Colonic mucosa (tissue), 4 donors: ENCODE measurements at regions of chr14 and their contacts with region 1.

Region 1: DNA sequence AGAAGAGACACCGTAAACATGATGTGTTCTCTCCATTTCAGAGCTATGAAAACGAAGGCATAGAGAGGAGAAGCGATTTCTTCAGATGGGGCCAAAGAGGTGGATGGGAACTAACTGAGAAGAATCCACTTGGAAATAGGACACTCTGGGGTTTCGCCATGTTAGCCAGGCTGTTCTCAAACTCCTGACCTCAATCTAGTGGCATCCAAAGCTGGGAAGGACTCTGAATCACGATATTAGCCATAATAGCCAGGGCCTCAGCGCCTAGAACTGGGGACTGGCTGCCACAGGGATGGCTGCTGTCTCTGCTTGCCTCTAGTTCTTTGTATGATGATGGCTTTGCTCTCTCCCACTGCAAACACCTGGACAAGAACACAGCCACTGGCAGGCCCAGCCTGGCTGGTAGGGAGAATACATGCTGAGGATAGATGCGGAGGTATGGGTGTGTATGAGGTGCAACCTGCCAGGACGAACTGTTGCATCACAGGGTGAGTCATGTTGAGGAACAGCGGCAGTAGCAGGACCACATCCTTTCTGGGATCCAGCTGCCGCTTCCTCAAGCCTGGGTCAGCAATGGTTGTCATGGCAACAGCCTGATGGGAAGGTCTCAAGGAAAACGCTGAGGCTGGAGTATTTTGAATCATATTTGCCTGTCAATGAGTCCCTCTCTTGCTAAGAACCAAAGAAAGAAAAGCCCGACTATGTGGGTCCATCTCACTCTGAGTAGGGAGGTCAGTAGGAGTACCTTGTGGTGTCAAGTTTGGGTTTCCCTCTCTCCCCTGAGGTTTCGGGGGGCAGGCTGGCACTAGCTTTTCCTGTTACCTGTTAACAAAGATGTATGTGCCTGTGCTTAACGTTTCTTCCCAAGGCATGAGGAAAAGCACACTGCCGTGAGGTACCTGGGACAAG is 31.1 kb downstream of the CCDC177 start:
- DNase-seq: peak; percentile 23
- H3K4me3 ChIP-seq: no peak overlapping the region
- H3K27ac ChIP-seq: no peak overlapping the region
- H3K4me1 ChIP-seq: no peaks in the 10 kb centered on the region
- H3K27me3 ChIP-seq: peaks cover 6% of the 10 kb centered on the region
- CTCF ChIP-seq: no peak

Region 2: GRCh38 chr14:69493791-69494190 is 49.8 kb before region 1 on chr14:
- intact Hi-C with region 1: no loop called
- DNase-seq: no peak
- H3K4me3 ChIP-seq: no peak overlapping the region
- H3K27ac ChIP-seq: no peak overlapping the region
- H3K4me1 ChIP-seq: no peaks in the 10 kb centered on the region
- H3K27me3 ChIP-seq: no peaks in the 10 kb centered on the region
- CTCF ChIP-seq: no peak

Region 3: GRCh38 chr14:69574954-69575295 is 31.3 kb after region 1 on chr14:
- intact Hi-C with region 1: loop called (anchors 5 kb)
- DNase-seq: no peak
- H3K4me3 ChIP-seq: no peak overlapping the region
- H3K27ac ChIP-seq: no peak overlapping the region
- H3K4me1 ChIP-seq: peaks cover 7% of the 10 kb centered on the region
- H3K27me3 ChIP-seq: peaks cover 56% of the 10 kb centered on the region
- CTCF ChIP-seq: no peak

Region 4: DNA sequence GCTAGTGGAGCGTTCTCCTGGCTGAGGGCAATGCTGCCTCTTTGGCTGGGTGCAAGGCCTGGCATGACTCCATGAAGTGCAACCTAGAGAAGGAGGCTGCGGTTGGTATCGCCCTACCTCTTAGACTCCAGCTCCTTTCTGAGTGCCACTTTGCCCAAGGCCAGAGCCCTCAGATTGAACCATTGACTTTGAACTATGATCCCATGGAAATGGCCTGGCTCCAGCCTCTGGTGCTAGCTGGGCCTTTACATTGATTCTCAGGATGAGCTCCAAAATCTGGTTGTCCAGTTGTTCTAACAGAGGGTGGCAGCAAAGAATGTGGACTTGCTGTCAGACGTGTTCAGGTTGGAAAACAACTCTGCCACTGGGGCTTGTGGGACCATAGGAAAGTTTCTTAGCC is 319.5 kb after region 1 on chr14:
- intact Hi-C with region 1: no loop called
- DNase-seq: no peak
- H3K4me3 ChIP-seq: no peak overlapping the region
- H3K27ac ChIP-seq: no peak overlapping the region
- H3K4me1 ChIP-seq: no peaks in the 10 kb centered on the region
- H3K27me3 ChIP-seq: no peaks in the 10 kb centered on the region
- CTCF ChIP-seq: no peak